ENCODE measurements at regions of chr12 and their contacts with region 1.

Region 1: DNA sequence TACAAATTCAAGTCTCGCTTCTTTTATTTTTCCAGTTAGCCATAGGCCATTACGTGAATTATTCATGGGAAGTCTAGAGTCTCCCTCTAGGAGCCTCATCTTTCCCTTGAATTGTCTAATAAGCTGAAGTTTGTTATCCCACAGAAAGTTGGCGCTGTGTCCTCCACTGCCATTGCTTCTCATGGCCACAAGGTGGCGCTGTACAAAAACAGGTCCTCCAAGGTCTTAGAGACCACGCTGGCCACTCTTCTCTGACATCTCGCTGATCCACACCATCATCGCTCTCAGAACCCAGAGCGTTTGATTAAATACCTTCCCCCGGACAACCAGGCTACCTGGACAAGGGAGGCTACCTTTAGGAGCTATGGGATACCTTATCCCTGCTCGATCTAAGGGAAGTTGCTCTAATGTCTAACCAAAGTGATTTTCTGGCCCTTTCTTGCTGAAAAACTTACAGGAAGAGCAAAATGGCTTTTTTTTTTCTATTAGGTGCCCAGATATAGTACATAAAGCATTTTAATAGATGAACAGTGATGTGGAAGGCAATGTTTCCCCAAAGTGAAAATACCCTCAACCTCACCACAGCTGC is 110.0 kb downstream of the CCDC60 start:
- DNase-seq: peak; percentile 77

Region 2: DNA sequence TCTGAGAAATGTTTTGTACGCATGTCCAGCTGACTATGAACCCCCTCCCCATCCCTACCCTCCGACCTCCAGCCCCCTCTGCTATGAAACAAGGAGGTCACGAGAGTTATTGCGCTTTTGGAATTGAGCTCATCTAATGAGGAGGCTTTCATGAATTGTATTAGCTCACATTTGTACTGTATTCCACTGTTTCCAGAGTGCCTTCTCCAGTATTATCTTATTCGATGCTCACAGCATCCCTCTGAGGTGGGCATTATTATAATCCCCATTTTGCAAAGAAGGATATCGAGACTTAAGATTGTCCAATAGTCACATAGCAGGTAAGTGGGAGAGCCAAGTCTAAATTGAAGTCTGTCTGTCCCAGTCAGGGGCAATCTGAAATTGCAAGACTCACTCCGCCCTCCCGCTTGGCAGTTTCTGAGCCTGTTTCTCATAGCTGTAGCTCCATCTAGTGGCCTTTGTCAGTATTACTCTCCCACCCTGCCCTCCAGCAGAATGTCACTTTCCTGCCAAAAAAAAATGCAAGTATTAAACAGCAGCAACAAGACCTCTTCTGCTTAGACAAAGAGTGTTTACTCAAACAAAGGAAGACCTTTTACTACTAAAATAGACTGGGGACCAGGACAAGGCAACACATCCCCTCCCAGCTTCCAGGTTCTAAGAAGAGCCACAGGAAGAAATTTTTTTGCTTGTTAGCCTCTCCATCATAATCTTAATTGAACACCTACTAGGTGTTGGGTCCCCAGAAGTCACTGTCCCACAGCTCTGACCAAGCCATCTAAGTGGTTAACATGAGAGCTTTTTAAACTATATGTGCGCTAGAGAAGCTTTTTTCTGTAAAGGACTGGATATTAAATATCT is 100.4 kb after region 1 on chr12:
- CTCF ChIA-PET with region 1: interaction called, 13 read pairs
- POLR2A ChIA-PET with region 1: no interaction called
- DNase-seq: peak; percentile 75